MCF 10A (cell line): ENCODE measurements at regions of chr2 and their contacts with region 1.

Region 1: DNA sequence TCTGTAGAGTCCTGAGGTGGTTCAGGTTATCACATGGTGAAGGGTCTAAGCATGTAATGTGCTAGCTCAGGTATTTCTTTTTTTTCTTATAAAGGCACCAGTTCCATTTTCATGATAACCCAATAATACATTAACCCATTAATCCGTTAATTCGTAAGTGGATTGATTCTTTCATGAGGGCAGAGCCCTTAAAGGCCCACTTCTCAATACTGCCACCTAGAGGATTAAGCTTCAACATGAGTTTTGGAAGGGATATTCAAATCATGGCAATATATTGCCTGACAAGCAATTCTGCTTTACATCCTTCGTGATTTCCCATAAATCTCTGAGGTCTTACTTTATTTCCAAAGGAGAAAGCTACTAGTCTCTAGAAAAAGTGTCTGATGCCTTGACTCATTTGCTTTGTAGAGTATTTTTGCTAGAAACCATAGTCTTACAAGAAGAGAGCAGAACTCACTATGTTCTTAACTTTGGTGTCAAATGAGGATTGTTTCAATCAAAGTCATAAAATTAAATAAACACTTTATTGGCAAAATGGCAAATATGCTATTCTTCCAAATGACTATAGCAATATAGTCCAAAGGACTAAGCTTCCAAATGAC is 271.3 kb downstream of the KCNS3 start:
- DNase-seq: peak; percentile 57
- H3K4me3 Mint-ChIP-seq: no peak overlapping the region
- H3K27ac Mint-ChIP-seq: no peak overlapping the region
- H3K4me1 Mint-ChIP-seq: no peaks in the 10 kb centered on the region
- H3K27me3 Mint-ChIP-seq: peaks cover 8% of the 10 kb centered on the region
- CTCF ChIP-seq: peak; percentile 57

Region 2: GRCh38 chr2:17879101-17879912 is 270.4 kb before region 1 on chr2:
- CTCF ChIA-PET with region 1: interaction called, 24 read pairs
- POLR2A ChIA-PET with region 1: interaction called, 3 read pairs
- intact Hi-C with region 1: no loop called
- DNase-seq: peak; percentile 86
- H3K4me3 Mint-ChIP-seq: peak overlapping the region; percentile 78
- H3K27ac Mint-ChIP-seq: no peak overlapping the region
- H3K4me1 Mint-ChIP-seq: no peaks in the 10 kb centered on the region
- H3K27me3 Mint-ChIP-seq: peaks cover 31% of the 10 kb centered on the region
- CTCF ChIP-seq: no peak

Region 3: GRCh38 chr2:18136881-18137475 is 12.8 kb before region 1 on chr2:
- CTCF ChIA-PET with region 1: interaction called, 22 read pairs
- POLR2A ChIA-PET with region 1: no interaction called
- intact Hi-C with region 1: no loop called
- DNase-seq: no peak
- H3K4me3 Mint-ChIP-seq: no peak overlapping the region
- H3K27ac Mint-ChIP-seq: no peak overlapping the region
- H3K4me1 Mint-ChIP-seq: no peaks in the 10 kb centered on the region
- H3K27me3 Mint-ChIP-seq: no peaks in the 10 kb centered on the region
- CTCF ChIP-seq: no peak

Region 4: GRCh38 chr2:18171191-18172139 is 21.7 kb after region 1 on chr2:
- CTCF ChIA-PET with region 1: interaction called, 10 read pairs
- POLR2A ChIA-PET with region 1: no interaction called
- intact Hi-C with region 1: no loop called
- DNase-seq: peak; percentile 65
- H3K4me3 Mint-ChIP-seq: no peak overlapping the region
- H3K27ac Mint-ChIP-seq: no peak overlapping the region
- H3K4me1 Mint-ChIP-seq: peaks cover 18% of the 10 kb centered on the region
- H3K27me3 Mint-ChIP-seq: peaks cover 9% of the 10 kb centered on the region
- CTCF ChIP-seq: no peak

Region 5: DNA sequence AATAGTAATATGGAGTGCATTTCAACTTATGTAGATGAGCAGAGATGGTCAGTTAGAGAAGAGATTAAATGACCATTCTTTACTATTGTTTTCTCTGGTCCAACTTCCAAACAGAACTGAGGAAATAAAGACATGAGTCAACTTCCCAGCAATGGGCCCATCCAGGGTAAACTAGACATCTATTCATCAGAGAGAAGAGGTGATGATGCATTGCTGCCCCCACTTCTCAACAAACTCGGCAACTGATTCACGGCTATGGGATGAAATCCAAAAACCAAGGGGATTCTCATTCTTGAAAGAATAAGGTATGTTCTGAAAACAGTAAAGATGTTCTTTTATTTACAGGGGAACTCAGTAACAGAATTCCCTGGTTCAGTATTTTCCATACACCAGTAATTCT is 220.0 kb after region 1 on chr2:
- CTCF ChIA-PET with region 1: interaction called, 10 read pairs
- POLR2A ChIA-PET with region 1: no interaction called
- intact Hi-C with region 1: no loop called
- DNase-seq: no peak
- H3K4me3 Mint-ChIP-seq: no peak overlapping the region
- H3K27ac Mint-ChIP-seq: no peak overlapping the region
- H3K4me1 Mint-ChIP-seq: peaks cover 11% of the 10 kb centered on the region
- H3K27me3 Mint-ChIP-seq: no peaks in the 10 kb centered on the region
- CTCF ChIP-seq: no peak

Region 6: GRCh38 chr2:18824261-18824790 is 674.6 kb after region 1 on chr2:
- CTCF ChIA-PET with region 1: no interaction called
- POLR2A ChIA-PET with region 1: no interaction called
- intact Hi-C with region 1: no loop called
- DNase-seq: no peak
- H3K4me3 Mint-ChIP-seq: no peak overlapping the region
- H3K27ac Mint-ChIP-seq: no peak overlapping the region
- H3K4me1 Mint-ChIP-seq: peaks cover 4% of the 10 kb centered on the region
- H3K27me3 Mint-ChIP-seq: no peaks in the 10 kb centered on the region
- CTCF ChIP-seq: no peak